RWPE1 (cell line): ENCODE measurements at regions of chr1 and their contacts with region 1.

Region 1: GRCh38 chr1:204162231-204163074 is 3.7 kb downstream of the REN start:
- DNase-seq: peak; percentile 95
- H3K27ac ChIP-seq: no peak overlapping the region
- CTCF ChIP-seq: peak; percentile 99

Region 2: DNA sequence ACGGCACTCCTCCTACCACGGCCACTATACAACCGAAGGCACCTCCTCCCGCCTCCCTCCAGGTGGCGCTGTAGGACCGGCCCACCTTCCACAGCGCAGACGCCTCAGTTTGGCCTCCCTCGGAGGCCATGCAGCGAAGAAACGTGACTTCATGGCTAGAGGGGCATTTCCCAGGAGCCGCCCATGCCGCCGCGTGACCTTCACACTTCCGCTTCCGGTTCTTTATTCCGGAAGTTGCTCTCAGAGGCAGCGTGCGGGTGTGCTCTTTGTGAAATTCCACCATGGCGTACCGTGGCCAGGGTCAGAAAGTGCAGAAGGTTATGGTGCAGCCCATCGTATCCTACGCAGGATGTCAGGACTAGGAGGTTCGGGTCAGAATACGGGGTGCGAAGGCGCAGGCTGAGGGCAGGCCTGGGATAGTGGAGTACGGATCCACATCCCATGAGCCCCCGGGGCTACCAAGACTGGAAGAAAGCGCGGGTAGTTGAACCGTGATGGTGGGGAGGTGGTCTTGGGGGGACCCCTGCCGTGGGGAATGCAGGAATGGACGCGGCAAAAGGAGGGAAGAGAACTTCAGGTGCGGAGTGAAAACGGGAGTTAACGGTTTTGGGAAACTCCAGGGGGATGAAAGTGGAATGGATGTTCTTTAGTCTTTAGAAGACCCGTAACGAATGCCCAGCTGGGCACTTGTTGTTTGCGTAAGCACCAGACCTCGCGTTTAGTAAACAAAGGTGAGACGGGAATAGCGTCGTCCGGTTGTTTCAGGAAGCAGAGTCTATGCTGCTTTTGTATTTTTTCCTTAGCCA is 300.9 kb before region 1 on chr1 and contains the start of gene SNRPE:
- CTCF ChIA-PET with region 1: interaction called, 18 read pairs
- POLR2A ChIA-PET with region 1: no interaction called
- DNase-seq: peak; percentile 98
- H3K27ac ChIP-seq: peak within 1 kb of the TSS; percentile 99
- CTCF ChIP-seq: peak; percentile 96

Region 3: GRCh38 chr1:204065174-204065985 is 97.1 kb before region 1 on chr1:
- CTCF ChIA-PET with region 1: no interaction called
- POLR2A ChIA-PET with region 1: no interaction called
- DNase-seq: peak; percentile 58
- H3K27ac ChIP-seq: no peak overlapping the region
- CTCF ChIP-seq: no peak

Region 4: GRCh38 chr1:204128964-204129896 is 33.2 kb before region 1 on chr1:
- CTCF ChIA-PET with region 1: interaction called, 12 read pairs
- POLR2A ChIA-PET with region 1: no interaction called
- DNase-seq: peak; percentile 71
- H3K27ac ChIP-seq: peak overlapping the region; percentile 89
- CTCF ChIP-seq: peak; percentile 75

Region 5: GRCh38 chr1:204180133-204180532 is 17.7 kb after region 1 on chr1:
- CTCF ChIA-PET with region 1: interaction called, 17 read pairs
- POLR2A ChIA-PET with region 1: no interaction called
- DNase-seq: no peak
- H3K27ac ChIP-seq: no peak overlapping the region
- CTCF ChIP-seq: no peak

Region 6: DNA sequence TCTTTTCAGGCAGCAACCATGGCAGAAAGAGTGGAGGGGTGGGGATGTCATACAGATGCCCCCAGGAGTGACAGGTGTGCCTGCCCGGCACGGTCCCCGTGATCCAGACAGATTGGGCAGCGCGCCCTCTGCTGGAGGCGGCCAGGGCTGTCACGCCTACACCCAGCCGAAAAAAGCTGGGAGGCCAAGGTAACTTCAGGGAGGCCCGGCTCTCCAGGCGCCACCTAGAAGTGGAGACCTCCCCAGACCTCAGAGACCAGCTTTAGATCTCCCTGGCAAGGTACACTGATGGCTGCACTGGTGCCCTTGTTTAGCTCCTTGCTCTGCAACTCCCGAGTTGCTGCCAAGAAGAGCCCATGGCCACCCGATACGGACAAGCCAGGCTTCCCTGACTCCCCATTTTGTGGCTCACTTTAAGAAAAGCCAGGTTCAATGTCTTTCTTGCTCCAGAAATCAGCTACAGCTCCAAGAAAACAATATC is 44.7 kb after region 1 on chr1:
- CTCF ChIA-PET with region 1: interaction called, 144 read pairs
- POLR2A ChIA-PET with region 1: no interaction called
- DNase-seq: peak; percentile 91
- H3K27ac ChIP-seq: no peak overlapping the region
- CTCF ChIP-seq: peak; percentile 95

Region 7: DNA sequence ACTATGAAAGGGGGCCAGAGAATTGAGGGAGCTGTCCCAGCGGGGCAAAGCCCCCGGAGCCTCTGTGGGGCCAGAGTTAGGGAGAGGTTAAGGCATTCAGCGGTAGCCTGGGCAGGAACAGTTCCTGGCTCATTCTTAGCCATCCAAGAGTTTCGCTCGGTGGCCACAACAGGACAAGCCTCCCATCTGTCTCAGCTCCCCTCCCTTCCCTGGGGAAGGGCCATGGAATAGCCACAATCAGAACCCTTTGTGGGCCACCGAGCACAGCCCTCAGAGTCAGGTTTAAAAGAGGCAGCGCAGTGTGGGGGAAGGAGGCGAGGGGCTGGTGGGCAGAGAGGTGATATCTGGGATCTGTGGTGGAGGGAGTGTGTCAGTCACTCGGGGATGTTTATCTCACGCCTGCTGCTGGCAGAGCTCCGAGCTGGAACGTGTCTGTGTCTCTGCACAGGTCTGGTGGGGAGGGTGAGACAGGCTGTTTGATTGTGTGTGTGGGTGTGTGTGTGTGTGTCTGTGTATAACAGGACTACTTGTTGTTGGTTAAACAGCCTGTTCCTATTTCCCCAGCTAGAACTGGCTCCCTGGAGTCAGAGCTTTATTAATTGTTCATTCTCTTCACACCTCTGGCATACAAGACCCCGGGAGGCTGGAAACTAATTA is 100.9 kb after region 1 on chr1:
- CTCF ChIA-PET with region 1: interaction called, 19 read pairs
- POLR2A ChIA-PET with region 1: no interaction called
- DNase-seq: no peak
- H3K27ac ChIP-seq: no peak overlapping the region
- CTCF ChIP-seq: no peak

Region 8: DNA sequence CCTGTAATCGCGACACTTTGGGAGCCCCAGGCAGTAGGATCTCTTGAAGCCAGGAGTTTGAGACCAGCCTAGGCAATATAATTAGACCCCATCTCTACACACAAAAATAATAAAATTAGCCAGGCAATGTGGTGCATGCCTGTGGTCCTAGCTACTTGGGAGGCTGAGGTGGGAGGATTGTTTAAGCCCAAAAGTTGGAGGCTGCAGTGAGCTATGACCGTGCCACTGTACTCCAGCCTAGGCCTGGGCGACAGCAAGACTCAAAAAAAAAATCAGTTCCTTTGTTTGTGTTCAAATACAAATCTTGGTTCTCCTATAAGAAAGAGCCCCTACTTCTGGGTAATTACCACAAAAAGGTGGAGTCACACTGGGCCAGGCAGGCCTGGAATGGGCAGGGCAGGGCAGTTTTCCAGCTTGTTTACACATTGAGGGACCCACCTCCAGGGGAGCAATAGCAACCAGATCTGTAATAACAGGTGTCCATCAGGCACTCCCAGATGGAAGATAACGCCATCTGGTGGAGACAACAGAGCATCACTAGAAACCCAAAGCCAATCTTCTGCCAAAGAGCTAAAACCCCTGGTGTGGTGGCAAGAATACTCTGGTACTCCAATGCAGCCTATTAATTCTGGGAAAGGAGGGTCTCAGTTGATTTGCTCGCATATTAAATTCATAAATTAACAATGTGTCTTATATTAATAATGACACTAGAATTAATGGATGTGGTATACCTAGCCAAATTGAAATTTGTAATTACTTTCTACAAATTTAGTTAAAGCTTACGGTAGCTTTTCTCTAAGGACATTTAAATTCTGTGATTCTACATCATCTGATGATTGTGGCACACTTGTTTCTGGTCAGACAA is 236.0 kb after region 1 on chr1:
- CTCF ChIA-PET with region 1: interaction called, 32 read pairs
- POLR2A ChIA-PET with region 1: no interaction called
- DNase-seq: peak; percentile 98
- H3K27ac ChIP-seq: peak overlapping the region; percentile 61
- CTCF ChIP-seq: peak; percentile 86